Ascending aorta (tissue), 2 donors: ENCODE measurements at regions of chr2 and their contacts with region 1.

Region 1: DNA sequence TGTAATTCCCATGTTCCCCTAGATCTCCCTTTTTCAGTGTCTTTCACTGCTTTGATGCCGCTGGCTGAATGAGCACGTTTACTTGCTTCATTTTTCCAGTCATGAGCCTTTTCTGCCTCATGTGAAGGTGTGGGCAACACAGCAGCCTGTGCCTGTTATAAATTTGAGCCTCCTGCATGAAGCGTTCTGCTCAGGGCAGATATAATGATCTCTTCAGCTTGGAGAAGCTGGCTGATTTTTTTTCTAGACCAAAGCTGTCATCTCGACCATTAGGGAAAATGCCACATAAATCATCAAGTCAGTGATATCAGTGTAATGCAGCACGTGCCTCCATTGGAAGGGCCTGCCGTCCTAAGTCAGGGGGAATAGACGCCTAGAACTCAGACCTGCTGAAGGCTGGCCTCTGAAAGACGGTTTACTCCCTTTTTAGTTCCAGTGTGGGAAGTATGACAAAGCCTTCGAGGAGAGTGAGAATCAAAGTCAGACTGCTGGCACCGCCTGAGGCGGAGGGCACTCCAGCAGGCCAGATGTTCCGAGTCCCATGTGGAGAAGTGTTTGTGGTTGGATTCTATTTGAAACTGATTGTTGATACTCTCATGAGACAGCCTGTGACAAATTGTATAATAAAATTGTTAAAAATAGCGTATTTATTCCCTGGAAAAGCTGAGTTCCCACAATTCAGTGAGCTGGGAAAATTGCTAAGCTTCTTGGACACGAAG is 196.5 kb downstream of the MYO1B start:
- DNase-seq: peak in 1 of 2 donors; percentile 66
- H3K4me3 ChIP-seq: no peak overlapping the region
- H3K27ac ChIP-seq: peak overlapping the region; percentile 25 to 31
- H3K4me1 ChIP-seq: peaks cover 0 to 5% of the 10 kb centered on the region in 2 donors
- H3K27me3 ChIP-seq: no peaks in the 10 kb centered on the region
- CTCF ChIP-seq: no peak

Region 2: DNA sequence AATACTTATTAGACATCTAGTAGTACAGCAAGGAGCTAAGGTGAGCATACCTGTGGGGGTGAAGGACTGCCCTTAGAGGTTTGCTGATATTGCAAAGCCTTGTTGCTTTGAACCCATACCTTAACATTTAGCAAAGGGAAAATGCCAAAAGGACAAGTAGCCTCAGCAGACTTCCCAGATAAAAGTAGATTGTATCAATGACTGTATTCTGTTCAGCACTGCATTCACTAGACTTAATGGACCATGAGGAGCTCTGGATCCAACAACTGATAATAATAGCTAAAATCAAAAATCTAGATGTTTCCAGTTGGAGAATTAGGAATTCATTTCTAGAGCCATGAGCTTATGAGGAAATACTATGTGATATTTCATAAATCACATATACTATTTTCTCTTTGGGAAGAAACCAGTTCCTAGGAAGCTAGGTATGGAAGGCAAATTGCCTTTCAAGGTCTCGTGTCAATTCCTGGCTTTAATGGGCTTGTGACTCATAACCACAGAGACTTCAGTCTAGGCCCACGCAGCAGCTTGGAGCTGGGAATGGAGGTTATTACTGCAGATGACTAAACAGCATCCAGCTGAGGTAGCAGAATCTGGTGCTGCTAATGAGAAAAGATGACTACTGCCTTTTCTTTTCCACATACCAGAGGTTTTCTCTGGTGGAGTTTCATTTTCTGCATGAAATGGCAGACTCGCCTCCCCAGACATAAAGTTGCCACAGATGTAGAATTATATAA is 45.1 kb after region 1 on chr2:
- intact Hi-C with region 1: loop called (anchors 5 kb)
- DNase-seq: no peak
- H3K4me3 ChIP-seq: no peak overlapping the region
- H3K27ac ChIP-seq: no peak overlapping the region
- H3K4me1 ChIP-seq: no peaks in the 10 kb centered on the region
- H3K27me3 ChIP-seq: no peaks in the 10 kb centered on the region
- CTCF ChIP-seq: no peak